A549 (cell line): ENCODE measurements at regions of chr12 and their contacts with region 1.

Region 1: DNA sequence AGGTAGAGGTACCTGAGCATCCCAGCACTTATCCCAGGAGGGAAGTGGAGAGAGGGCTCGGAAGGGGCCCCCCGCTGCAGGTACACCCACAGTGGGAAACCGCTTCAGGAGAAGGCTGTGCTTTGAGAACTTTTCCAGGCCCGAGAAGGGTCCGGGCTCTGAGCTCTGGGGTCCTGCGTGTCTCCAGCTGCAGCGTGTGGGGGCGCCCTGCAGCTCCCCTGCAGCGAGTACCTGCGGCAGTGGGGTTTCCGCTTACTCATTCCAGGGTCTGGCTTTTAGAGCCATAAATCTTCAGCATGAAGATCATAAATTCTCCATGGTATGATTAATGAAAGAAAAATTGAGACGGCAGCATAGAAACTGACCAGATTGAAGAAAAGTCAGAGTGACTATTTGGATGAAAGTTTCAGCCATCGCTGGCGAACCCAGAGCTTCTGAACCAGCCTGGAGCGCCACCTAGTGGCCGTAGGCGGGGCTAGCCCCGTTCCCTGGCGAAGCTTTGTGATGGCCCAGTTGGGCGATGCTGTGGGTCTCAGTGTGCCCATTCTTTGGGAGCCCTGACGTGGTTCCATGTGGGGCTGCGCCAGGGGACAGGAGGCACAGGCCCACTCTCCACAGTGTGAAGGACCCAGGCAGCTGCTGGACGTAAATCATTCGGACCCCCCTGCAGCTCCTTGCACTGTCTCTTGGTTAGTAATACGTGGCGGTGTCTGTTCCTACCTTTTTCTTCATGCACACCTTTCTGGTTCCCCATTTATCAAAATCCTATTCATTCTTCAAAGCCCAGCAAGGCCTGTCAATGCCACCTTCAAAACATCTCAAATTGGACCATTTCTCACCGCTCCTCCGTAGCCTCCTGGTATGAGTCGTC is 198.2 kb downstream of the TSPAN9 start:
- DNase-seq: peak; percentile 62 to 69
- ATAC-seq: peak; percentile 75 to 92
- H3K4me3 ChIP-seq: no peak overlapping the region
- H3K27ac ChIP-seq: no peak overlapping the region
- H3K4me1 ChIP-seq: peaks cover 10% of the 10 kb centered on the region
- CTCF ChIP-seq: peak; percentile 94
- EP300 ChIP-seq: no peak
- POLR2A ChIP-seq: no peak
- RAD21 ChIP-seq: peak; percentile 92

Region 2: DNA sequence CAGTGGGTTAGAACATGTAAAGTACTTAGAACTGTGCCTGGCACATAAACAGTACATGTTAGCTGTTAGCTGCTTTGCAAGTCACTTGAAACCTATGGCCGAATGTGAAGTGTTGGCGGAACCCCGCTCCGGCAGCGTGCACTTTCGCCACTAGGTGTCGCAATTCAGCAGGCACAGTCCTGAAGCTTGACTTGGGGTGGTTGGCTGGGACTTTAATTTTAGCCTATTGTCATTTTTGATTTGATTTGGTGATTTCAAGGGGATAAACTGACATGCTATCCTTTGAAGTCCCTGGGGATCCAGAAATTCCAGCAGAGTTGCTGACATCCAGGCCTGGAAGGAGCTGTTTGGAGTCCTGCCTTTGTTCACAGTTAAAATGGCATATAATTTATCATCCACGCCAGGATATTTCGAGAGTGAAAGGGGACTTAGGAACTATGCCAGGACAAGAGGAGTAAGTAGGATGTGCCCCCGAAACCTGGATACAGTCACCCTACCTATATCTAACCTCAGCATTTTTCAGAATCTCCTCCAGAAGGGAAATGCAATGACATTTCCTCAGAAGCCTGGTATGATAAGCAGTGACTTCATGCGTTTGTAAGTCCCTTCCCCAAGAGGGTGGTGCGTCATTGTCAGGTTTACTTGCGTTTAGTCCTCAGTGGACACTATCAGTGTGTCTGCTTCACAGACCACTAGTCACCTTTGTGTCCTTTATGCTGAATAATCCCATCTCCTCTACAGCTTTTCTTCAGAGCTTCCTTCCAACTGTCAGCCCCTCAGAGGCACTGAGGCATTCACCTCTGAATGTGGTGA is 201.8 kb before region 1 on chr12:
- CTCF ChIA-PET with region 1: interaction called, 127 read pairs
- POLR2A ChIA-PET with region 1: interaction called, 4 read pairs
- DNase-seq: peak; percentile 89 to 92
- ATAC-seq: peak; percentile 49 to 72; a peak in 5 of 6 replicates
- H3K4me3 ChIP-seq: no peak overlapping the region
- H3K27ac ChIP-seq: no peak overlapping the region
- H3K4me1 ChIP-seq: peaks cover 11% of the 10 kb centered on the region; the same call in 2 of the 3 replicates
- CTCF ChIP-seq: peak; percentile 95
- EP300 ChIP-seq: no peak
- POLR2A ChIP-seq: no peak
- RAD21 ChIP-seq: peak; percentile 73 to 82

Region 3: DNA sequence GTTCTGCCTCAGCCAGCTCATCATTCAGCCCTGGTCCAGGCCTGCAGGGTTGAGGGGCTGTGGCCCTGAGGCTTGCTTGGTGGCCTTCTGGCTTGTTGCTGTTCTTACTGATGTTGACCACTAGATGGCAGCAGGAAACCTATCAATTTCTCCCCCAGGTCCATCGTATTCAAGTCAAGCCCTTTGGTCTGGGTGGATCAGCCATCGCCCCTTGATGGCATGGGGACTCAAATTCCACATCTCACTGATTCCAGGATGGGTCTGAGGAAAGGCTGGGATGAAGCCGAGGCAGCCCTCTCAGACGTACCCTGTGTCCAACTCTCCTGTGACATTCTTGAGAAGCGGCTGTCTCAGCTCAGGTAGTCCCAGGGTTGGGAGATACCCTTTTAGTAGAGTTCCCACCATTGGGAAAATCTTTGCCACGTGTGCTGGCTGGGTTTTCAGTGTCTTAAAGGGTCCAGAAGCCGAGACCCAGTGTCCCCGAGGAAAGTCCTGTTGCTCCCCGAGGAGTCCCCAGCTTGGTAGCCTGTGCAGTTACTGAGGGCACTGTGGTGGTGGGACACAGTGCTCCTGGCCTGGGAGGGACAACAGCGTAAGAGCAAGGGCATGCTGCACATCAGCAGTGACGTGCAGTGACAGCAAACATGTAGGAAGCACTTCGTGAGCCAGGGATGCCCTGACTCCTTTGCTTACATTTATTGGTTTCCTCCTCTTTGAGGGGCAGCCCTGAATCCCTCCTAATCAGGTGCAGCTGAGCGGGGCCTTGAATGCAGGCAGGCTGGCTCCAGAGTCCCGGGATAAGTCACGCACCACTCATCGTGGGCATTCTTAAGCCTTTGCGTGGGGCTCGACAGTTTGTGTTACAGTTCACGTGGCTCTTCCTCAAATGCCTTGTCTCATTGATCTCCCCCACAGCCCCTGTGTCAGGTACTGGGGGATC is 139.6 kb before region 1 on chr12:
- CTCF ChIA-PET with region 1: interaction called, 353 read pairs
- POLR2A ChIA-PET with region 1: no interaction called
- DNase-seq: peak; percentile 83 to 89
- ATAC-seq: peak; percentile 84 to 92
- H3K4me3 ChIP-seq: no peak overlapping the region
- H3K27ac ChIP-seq: no peak overlapping the region; a peak in 1 of 6 replicates
- H3K4me1 ChIP-seq: peaks cover 11% of the 10 kb centered on the region; the same call in 1 of the 3 replicates
- CTCF ChIP-seq: peak; percentile 79
- EP300 ChIP-seq: no peak
- POLR2A ChIP-seq: no peak
- RAD21 ChIP-seq: peak; percentile 93

Region 4: DNA sequence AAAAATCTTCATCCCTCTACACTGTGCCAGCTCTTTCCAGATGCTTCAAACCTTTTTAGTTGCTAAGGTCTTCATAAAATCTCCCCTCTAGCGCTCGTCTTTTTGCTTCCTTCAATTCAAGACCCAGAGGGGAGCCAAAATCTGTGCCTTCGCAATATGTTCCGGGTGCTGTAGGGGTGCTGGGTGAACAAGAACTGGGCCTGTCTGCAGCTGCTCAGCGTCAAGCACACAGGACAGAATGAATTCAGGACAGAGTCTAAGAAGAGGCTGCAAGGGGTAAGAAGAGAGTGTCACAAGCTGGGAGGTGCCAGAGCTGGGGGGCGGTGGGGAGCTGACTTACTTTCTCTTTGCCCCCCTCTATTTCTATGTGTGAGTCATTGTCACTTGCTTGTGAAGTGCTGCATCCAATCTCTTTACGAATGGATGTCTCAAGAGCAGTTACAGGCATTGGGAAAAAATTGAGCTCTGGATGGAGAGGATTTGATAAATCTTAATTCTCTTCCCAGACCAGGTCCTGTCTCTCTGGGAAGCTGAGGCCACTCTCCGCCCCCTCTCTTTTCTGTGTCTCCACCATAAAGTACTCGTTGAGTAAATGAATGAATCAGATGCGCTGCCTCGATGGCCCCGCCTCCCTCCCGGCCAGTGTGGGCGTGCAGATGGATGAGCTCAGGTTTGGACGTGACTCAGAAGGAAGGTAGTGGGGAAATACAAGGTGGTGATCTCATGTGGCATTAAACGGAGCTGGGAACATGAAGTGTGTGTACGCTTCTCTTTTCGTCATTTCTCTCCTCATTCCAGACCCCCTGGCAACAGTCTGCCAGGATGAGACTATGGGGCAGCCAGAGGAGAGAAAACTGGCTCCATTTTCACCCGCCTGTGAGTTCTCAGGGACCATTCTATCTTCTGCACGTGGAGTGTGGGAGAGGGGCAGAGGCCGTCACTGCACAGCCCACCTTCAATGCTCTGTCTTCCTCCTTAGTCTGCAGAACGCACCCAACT is 106.9 kb before region 1 on chr12:
- CTCF ChIA-PET with region 1: interaction called, 27 read pairs
- POLR2A ChIA-PET with region 1: no interaction called
- DNase-seq: peak; percentile 86 to 88
- ATAC-seq: peak; percentile 88 to 89
- H3K4me3 ChIP-seq: peak overlapping the region; percentile 1; the same call in 1 of the 3 replicates
- H3K27ac ChIP-seq: peak overlapping the region; percentile 78 to 87
- H3K4me1 ChIP-seq: peaks cover 44% of the 10 kb centered on the region
- CTCF ChIP-seq: no peak
- EP300 ChIP-seq: peak in 1 of 2 experiments; percentile 27; a peak in 1 of 5 replicates
- POLR2A ChIP-seq: no peak
- RAD21 ChIP-seq: no peak

Region 5: GRCh38 chr12:3227076-3227975 is 48.1 kb before region 1 on chr12:
- CTCF ChIA-PET with region 1: interaction called, 10 read pairs
- POLR2A ChIA-PET with region 1: no interaction called
- DNase-seq: no peak
- ATAC-seq: 0 out of 6 replicates have a peak, but pooled peaks of 1 of the 2 experiments have one; percentile 31
- H3K4me3 ChIP-seq: no peak overlapping the region
- H3K27ac ChIP-seq: no peak overlapping the region
- H3K4me1 ChIP-seq: no peaks in the 10 kb centered on the region
- CTCF ChIP-seq: no peak
- EP300 ChIP-seq: no peak
- POLR2A ChIP-seq: no peak
- RAD21 ChIP-seq: no peak

Region 6: DNA sequence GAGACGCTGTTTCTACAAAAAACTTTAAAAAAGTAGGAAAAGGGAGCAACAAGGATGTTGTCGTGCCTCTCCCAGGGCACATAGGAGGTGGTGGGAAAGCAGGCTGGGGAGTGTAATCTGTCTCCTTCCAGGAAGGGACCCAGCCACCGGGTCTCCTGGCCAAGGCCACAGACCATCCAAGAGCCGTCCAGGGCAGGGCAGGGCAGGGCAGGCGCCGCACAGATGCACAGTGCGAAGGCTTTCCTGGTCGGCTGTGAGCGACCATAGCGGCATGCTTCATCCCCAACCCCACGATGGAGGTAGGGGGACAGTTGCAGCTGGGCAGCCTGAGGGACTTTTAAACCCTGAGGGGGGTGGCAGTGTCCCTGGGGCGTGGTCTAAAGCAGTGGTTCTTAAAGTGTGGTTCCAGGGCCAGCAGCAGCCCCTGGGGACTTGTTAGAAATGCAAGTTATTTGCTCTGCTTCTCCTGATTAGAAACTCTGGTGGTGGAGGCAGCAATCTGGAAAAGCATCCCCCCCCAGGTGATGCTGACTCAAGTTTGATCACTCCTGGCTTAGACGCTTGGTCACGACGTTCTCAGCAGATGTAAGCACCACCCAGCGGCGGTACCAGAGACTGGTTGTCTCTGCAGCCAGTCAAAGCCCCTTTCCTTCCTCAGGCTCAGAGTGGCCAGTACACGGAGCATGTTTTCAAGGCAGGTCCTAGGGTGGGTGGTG is 18.2 kb after region 1 on chr12:
- CTCF ChIA-PET with region 1: interaction called, 47 read pairs
- POLR2A ChIA-PET with region 1: no interaction called
- DNase-seq: peak; percentile 41 to 47
- ATAC-seq: peak; percentile 35 to 73; a peak in 3 of 6 replicates
- H3K4me3 ChIP-seq: no peak overlapping the region
- H3K27ac ChIP-seq: no peak overlapping the region
- H3K4me1 ChIP-seq: no peaks in the 10 kb centered on the region; the same call in 2 of the 3 replicates
- CTCF ChIP-seq: no peak
- EP300 ChIP-seq: no peak
- POLR2A ChIP-seq: no peak
- RAD21 ChIP-seq: no peak

Region 7: DNA sequence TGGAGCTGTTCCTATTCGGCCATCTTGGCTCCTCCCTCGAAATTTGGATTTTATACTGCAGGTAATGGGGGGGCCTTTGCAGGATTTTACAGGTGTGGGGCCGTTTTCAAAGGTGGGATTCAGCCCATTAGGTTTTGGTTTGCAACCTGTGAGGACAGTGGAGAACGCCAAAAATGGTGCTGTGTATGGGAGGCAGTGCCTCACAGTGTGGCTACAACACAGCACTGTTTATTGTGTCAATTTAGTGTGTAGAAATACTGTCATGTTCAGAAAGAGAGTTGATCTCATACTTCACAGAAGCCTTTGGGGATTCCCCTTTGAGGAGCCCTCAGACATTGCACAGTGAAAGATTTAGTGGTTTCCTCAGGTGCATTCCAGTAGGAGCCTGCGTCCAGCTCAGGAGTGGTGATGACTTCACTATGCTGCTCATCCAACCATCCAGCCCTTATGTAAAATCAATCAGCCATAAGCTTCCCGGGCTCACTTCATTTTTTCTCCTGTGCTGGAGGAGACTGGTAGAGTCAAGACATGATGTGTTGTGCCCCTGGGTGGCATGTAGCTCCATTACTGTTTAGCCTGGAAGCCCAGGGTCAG is 122.9 kb after region 1 on chr12:
- CTCF ChIA-PET with region 1: no interaction called
- POLR2A ChIA-PET with region 1: no interaction called
- DNase-seq: no peak
- ATAC-seq: no peak
- H3K4me3 ChIP-seq: no peak overlapping the region
- H3K27ac ChIP-seq: no peak overlapping the region
- H3K4me1 ChIP-seq: no peaks in the 10 kb centered on the region
- CTCF ChIP-seq: no peak
- EP300 ChIP-seq: no peak
- POLR2A ChIP-seq: no peak
- RAD21 ChIP-seq: no peak

Region 8: GRCh38 chr12:3432176-3432742 is 156.9 kb after region 1 on chr12:
- CTCF ChIA-PET with region 1: no interaction called
- POLR2A ChIA-PET with region 1: no interaction called
- DNase-seq: no peak
- ATAC-seq: peak in 1 of 2 experiments; percentile 26; a peak in 2 of 6 replicates
- H3K4me3 ChIP-seq: no peak overlapping the region
- H3K27ac ChIP-seq: no peak overlapping the region
- H3K4me1 ChIP-seq: no peaks in the 10 kb centered on the region
- CTCF ChIP-seq: no peak
- EP300 ChIP-seq: no peak
- POLR2A ChIP-seq: no peak
- RAD21 ChIP-seq: no peak